Dorsolateral prefrontal cortex (tissue), 120 donors: ENCODE measurements at regions of chr10 and their contacts with region 1.

Region 1: GRCh38 chr10:42988517-42989395 is 88.1 kb upstream of the RET start:
- DNase-seq: peak in 9 of 10 donors; percentile 18 to 58 (median 45)
- H3K4me3 ChIP-seq: no peak overlapping the region
- H3K27ac ChIP-seq: no peak overlapping the region
- H3K27me3 ChIP-seq: no peaks in the 10 kb centered on the region
- CTCF ChIP-seq: no peak

Region 2: DNA sequence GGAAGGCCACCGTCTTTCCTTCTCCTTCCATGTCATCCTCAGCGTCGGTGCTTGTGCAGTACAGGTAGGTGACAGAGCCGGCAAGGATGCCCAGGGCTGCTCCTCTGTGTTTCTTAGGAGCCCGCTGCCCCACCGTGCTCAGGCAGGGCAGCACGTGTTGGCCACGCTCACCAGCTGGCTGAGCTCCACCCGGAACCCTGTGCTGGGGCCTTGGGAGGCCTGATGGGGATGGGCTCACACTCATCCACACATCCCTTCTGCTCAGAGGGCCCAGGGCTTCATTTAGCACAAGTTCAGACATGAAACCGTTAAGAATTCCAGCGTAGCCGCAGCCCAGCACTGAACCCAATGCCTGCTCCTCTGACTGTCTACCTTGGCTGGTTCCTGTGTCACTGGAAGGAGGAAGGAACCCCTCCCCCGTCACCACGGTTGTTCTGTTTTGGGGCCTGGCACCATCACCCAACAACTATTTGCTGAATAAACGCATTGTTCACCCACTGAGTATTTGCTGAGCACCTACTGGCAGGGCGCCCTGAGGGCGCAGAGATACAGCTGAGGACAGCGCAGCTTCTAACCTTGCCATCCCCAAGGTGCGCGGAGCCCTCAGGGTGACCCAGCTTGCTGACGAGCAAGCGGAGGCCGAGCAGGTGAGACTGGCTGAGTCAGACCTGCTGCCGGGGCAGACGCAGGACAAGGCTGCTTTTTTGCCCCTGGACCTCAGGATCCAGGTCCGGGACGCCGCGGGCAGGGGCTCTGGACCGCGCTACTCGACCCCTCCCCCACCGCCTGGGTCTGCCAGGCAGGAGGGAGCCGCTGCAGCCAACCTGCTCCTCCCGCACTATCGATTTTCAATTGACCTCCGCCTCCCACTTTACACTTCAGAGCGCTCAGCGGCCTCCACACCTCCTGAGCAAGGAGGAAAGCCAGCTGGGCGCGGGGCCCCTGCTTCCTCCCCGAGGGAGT is 37.5 kb after region 1 on chr10:
- intact Hi-C with region 1: loop called in 1 of 2 experiments (anchors 5 kb)
- DNase-seq: no peak
- H3K4me3 ChIP-seq: no peak overlapping the region
- H3K27ac ChIP-seq: no peak overlapping the region
- H3K27me3 ChIP-seq: peaks cover 0 to 33% (median 7%) of the 10 kb centered on the region in 45 donors
- CTCF ChIP-seq: no peak